ENCODE measurements at regions of chr1 and their contacts with region 1.

Region 1: DNA sequence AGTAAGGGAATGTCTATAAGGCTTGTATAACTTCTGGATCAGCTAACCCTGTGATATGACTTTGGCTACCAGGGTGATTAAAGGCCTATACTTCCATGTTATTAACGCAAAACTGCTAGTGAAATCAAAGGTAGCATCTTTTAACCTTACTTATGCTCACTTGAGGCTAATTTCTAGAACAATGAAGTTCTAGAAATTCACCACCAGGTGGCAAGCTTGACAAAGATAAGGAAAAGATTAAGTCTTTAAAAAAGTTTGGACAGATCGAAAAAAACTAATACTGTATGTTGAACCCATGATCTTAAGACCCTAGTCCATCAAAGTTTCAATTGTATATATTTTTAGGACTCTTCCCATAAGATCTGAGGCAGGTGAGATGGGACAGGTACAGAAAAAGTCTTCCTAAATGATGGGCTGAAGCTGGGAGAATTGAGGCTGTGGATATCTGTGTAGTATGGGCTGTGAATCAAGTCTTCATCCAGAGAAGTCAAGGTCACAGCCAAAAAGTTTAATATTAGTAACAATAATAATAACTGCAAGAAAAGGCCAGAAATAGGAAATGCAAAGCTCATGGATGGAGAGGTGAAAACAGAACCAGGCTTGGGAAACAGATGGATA is 18.8 kb downstream of the KYAT3 start:
- DNase-seq: peak; percentile 55
- H3K4me3 ChIP-seq: no peak overlapping the region
- H3K27ac ChIP-seq: no peak overlapping the region
- H3K4me1 ChIP-seq: no peaks in the 10 kb centered on the region
- H3K27me3 ChIP-seq: no peaks in the 10 kb centered on the region
- CTCF ChIP-seq: peak; percentile 34 to 35
- POLR2A ChIP-seq: no peak

Region 2: GRCh38 chr1:88701275-88701674 is 272.4 kb before region 1 on chr1:
- CTCF ChIA-PET with region 1: no interaction called
- POLR2A ChIA-PET with region 1: no interaction called
- dilution Hi-C with region 1: no loop called
- intact Hi-C with region 1: no loop called
- DNase-seq: peak; percentile 22
- H3K4me3 ChIP-seq: no peak overlapping the region
- H3K27ac ChIP-seq: no peak overlapping the region
- H3K4me1 ChIP-seq: peaks cover 32% of the 10 kb centered on the region
- H3K27me3 ChIP-seq: no peaks in the 10 kb centered on the region
- CTCF ChIP-seq: no peak
- POLR2A ChIP-seq: no peak

Region 3: DNA sequence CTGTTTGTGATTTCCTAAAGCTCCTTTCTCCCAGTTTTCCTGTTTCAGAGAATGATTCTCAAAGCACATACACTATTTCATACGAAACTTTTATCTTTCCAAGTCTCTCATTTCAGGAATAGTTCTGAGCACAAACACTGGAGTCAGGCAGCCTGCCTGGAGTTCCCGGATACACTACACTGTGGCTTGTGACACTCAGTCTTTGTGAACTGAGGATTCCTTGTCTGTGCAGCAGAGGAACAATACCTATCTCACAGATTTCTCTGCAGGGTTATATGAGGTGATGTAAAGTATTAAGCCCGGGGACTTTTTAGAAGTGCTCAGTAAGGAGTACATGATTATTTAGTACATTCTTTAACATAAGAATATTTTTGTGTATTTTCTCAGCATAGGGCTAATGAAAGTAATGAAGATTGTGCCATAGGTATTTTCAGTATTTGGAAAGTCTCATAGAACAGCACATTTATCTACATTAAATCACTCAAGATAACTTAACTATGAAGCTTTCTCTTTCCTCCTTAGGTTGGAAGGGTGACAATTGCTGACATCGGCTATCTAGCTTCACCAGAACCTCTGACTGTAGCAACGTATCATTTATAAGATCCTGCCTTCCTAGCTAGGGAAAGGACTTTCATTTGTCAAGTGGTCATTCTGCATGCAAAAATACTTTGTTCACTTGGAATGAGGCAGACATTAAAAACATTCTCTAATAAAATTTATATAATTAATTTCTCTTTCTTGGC is 139.4 kb after region 1 on chr1:
- CTCF ChIA-PET with region 1: no interaction called
- POLR2A ChIA-PET with region 1: no interaction called
- dilution Hi-C with region 1: no loop called
- intact Hi-C with region 1: no loop called
- DNase-seq: no peak
- H3K4me3 ChIP-seq: no peak overlapping the region
- H3K27ac ChIP-seq: no peak overlapping the region
- H3K4me1 ChIP-seq: no peaks in the 10 kb centered on the region
- H3K27me3 ChIP-seq: no peaks in the 10 kb centered on the region
- CTCF ChIP-seq: no peak
- POLR2A ChIP-seq: no peak

Region 4: GRCh38 chr1:89358287-89358893 is 384.8 kb after region 1 on chr1:
- CTCF ChIA-PET with region 1: interaction called, 4 read pairs
- POLR2A ChIA-PET with region 1: no interaction called
- dilution Hi-C with region 1: no loop called
- intact Hi-C with region 1: loop called (anchors 1 kb)
- DNase-seq: peak; percentile 62
- H3K4me3 ChIP-seq: no peak overlapping the region
- H3K27ac ChIP-seq: no peak overlapping the region
- H3K4me1 ChIP-seq: no peaks in the 10 kb centered on the region
- H3K27me3 ChIP-seq: peaks cover 4 to 10% of the 10 kb centered on the region in 2 experiments
- CTCF ChIP-seq: peak; percentile 63 to 75
- POLR2A ChIP-seq: no peak

Region 5: DNA sequence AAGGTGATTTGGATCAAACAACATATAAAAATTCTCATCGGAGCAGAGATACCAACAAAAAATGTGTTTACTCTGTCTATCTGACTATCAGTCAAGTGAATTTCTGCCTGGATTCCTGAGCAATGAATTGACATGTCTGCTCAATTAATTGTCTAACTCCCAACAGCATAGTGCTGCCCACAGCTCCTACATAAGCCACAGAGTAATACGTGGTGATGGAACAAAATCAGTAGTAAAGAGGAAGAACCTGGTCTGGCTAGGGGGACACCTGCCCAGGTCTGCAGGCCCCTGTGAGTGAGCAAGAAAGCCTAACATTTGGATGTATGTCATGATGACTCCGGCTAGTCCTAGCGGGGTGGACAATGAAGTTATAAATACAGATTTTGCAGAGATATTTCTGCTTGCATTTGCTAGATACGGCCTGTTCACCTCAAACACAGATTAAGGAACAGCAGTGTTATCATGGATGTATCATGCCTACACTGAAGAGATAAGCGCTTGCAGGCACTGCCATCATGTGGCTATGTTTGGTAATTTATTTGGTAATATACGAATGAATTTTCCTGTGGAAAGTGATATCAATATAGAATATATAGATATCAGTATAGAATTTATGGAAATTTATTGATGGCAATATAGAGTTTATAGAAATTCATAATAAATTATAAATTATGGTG is 481.4 kb after region 1 on chr1:
- CTCF ChIA-PET with region 1: interaction called, 8 read pairs
- POLR2A ChIA-PET with region 1: no interaction called
- dilution Hi-C with region 1: no loop called
- intact Hi-C with region 1: loop called (anchors 1 kb)
- DNase-seq: peak; percentile 58
- H3K4me3 ChIP-seq: no peak overlapping the region
- H3K27ac ChIP-seq: no peak overlapping the region
- H3K4me1 ChIP-seq: no peaks in the 10 kb centered on the region
- H3K27me3 ChIP-seq: peaks cover 0 to 7% of the 10 kb centered on the region in 2 experiments
- CTCF ChIP-seq: peak; percentile 22 to 39
- POLR2A ChIP-seq: no peak

Measured in endothelial cell of umbilical vein (primary cell).